Ovary (tissue), 10 donors: ENCODE measurements at regions of chr4 and their contacts with region 1.

Region 1: GRCh38 chr4:37686373-37687193 is at the start of gene RELL1:
- DNase-seq: peak; percentile 100
- H3K4me3 ChIP-seq: peak within 1 kb of the TSS; percentile 92
- H3K27ac ChIP-seq: peak within 1 kb of the TSS; percentile 86 to 94
- H3K4me1 ChIP-seq: peaks cover 3% of the 10 kb centered on the region
- H3K27me3 ChIP-seq: no peaks in the 10 kb centered on the region
- CTCF ChIP-seq: no peak
- EP300 ChIP-seq: no peak
- POLR2A ChIP-seq: no peak
- total RNA-seq, gene RELL1: 21.3 to 31.4 (median 24.4) TPM

Region 2: DNA sequence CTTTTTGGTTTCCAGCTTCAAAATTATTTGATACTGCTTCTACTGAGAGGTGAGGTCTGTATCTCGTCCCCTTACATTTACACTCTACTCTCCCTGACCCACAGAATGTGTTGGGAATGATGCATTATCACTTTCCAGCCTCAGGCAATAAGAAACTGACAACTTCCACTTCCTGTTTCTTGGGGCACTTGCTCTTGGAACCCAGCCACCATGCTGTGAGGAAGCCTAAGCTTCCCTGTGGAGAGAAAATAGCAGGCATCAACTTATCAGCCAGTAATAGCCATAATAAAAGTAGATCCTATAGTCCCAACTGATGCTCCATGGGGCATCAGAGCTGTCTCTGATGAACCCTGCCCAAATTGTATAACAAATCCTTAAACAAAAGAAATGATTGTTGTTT is 33.0 kb before region 1 on chr4:
- intact Hi-C with region 1: no loop called
- DNase-seq: no peak
- H3K4me3 ChIP-seq: no peak overlapping the region
- H3K27ac ChIP-seq: no peak overlapping the region
- H3K4me1 ChIP-seq: peaks cover 1% of the 10 kb centered on the region
- H3K27me3 ChIP-seq: no peaks in the 10 kb centered on the region
- CTCF ChIP-seq: no peak
- EP300 ChIP-seq: no peak
- POLR2A ChIP-seq: no peak

Region 3: GRCh38 chr4:38663801-38664705 is 977.5 kb after region 1 on chr4 and contains the start of gene KLF3:
- intact Hi-C with region 1: loop called in 1 of 4 experiments (anchors 10 kb)
- DNase-seq: peak; percentile 92 to 95 (median 93)
- H3K4me3 ChIP-seq: peak within 1 kb of the TSS; percentile 74
- H3K27ac ChIP-seq: peak within 1 kb of the TSS; percentile 97 to 98
- H3K4me1 ChIP-seq: no peaks in the 10 kb centered on the region
- H3K27me3 ChIP-seq: no peaks in the 10 kb centered on the region
- CTCF ChIP-seq: no peak
- EP300 ChIP-seq: no peak
- POLR2A ChIP-seq: peak; percentile 88
- total RNA-seq, gene KLF3: 67.9 to 111 (median 76.7) TPM